Activated CD4-positive, alpha-beta T cell treated with anti-CD3 and anti-CD28 coated beads for 36 hours (primary cell): ENCODE measurements at regions of chr18 and their contacts with region 1.

Region 1: GRCh38 chr18:35407871-35408481 is 30.8 kb upstream of the ZNF396 start:
- DNase-seq: peak; percentile 49
- ATAC-seq: peak; percentile 92
- H3K4me3 Mint-ChIP-seq: no peak overlapping the region
- H3K27ac Mint-ChIP-seq: no peak overlapping the region
- H3K4me1 Mint-ChIP-seq: peaks cover 10% of the 10 kb centered on the region
- H3K27me3 Mint-ChIP-seq: peaks cover 6% of the 10 kb centered on the region

Region 2: GRCh38 chr18:35337286-35337685 is 70.7 kb before region 1 on chr18:
- CTCF ChIA-PET with region 1: no interaction called
- POLR2A ChIA-PET with region 1: no interaction called
- intact Hi-C with region 1: no loop called
- DNase-seq: no peak
- ATAC-seq: no peak
- H3K4me3 Mint-ChIP-seq: no peak overlapping the region
- H3K27ac Mint-ChIP-seq: peak overlapping the region; percentile 53
- H3K4me1 Mint-ChIP-seq: peaks cover 42% of the 10 kb centered on the region
- H3K27me3 Mint-ChIP-seq: no peaks in the 10 kb centered on the region

Region 3: DNA sequence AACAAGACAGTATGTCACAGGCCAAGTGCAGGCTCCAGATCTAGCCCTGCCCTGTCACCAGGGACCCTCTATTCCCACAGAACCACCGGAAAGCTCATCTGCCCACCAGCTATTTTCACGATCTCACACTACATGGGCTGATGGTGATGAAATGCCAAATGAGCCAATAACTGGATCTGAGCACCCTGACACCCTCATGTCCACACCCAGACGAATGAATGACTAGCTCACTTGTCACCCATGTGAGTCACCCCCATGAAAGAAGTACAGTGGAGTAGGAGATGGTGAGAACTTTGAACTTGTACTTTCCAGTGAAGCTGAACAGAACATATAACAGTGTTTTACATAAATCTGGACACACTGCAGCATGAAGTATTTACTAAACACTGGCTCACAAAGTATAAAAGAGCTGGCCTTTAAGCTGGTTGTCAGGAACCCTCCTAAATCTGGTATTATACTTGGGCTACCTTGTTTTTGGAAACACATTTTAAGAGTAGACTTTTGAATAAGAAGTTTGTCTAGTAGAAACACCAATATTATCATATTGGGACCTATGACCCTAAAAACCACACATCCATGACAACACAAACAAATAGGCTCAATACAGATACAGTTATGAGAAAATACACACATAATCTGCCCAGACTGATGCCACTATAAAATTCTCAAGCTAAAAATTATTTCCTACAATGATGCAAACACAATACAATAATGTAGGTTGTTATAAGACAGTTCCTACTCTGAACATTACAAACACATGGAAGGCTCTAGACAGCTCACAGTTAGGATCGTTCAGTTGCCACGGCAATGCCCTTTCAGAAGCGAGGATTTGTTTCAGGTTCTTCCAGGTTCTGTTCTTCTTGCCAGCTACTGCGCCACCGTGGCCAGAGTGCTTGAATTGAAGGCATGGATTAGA is 70.8 kb after region 1 on chr18:
- CTCF ChIA-PET with region 1: interaction called, 8 read pairs
- POLR2A ChIA-PET with region 1: no interaction called
- intact Hi-C with region 1: loop called in 1 of 2 experiments (anchors 5 kb)
- DNase-seq: peak; percentile 65
- ATAC-seq: peak; percentile 100
- H3K4me3 Mint-ChIP-seq: peak overlapping the region; percentile 22
- H3K27ac Mint-ChIP-seq: peak overlapping the region; percentile 55
- H3K4me1 Mint-ChIP-seq: peaks cover 40% of the 10 kb centered on the region
- H3K27me3 Mint-ChIP-seq: no peaks in the 10 kb centered on the region

Region 4: GRCh38 chr18:35513181-35513936 is 105.4 kb after region 1 on chr18:
- CTCF ChIA-PET with region 1: interaction called, 3 read pairs
- POLR2A ChIA-PET with region 1: no interaction called
- intact Hi-C with region 1: loop called (anchors 5 kb)
- DNase-seq: no peak
- ATAC-seq: no peak
- H3K4me3 Mint-ChIP-seq: no peak overlapping the region
- H3K27ac Mint-ChIP-seq: no peak overlapping the region
- H3K4me1 Mint-ChIP-seq: peaks cover 2% of the 10 kb centered on the region
- H3K27me3 Mint-ChIP-seq: no peaks in the 10 kb centered on the region